Psoas muscle (tissue), 8 donors: ENCODE measurements at regions of chr12 and their contacts with region 1.

Region 1: GRCh38 chr12:100189636-100190394 is 10.8 kb upstream of the ACTR6 start:
- DNase-seq: no peak
- ATAC-seq: no peak
- H3K4me3 ChIP-seq: no peak overlapping the region
- H3K27ac ChIP-seq: no peak overlapping the region
- H3K4me1 ChIP-seq: no peaks in the 10 kb centered on the region
- H3K27me3 ChIP-seq: no peaks in the 10 kb centered on the region
- CTCF ChIP-seq: no peak

Region 2: GRCh38 chr12:100154474-100155247 is 35.2 kb before region 1 on chr12:
- intact Hi-C with region 1: loop called (anchors 5 kb)
- DNase-seq: peak; percentile 68 to 81
- ATAC-seq: peak; percentile 47 to 84 (median 74)
- H3K4me3 ChIP-seq: no peak overlapping the region
- H3K27ac ChIP-seq: no peak overlapping the region
- H3K4me1 ChIP-seq: no peaks in the 10 kb centered on the region
- H3K27me3 ChIP-seq: no peaks in the 10 kb centered on the region
- CTCF ChIP-seq: peak; percentile 67